Right ventricle myocardium inferior (tissue), 1 donor: ENCODE measurements at regions of chr10 and their contacts with region 1.

Region 1: GRCh38 chr10:51074238-51075028 is at the start of gene PRKG1:
- DNase-seq: peak; percentile 86
- ATAC-seq: peak; percentile 95
- total RNA-seq, gene PRKG1: 28.1 TPM

Region 2: DNA sequence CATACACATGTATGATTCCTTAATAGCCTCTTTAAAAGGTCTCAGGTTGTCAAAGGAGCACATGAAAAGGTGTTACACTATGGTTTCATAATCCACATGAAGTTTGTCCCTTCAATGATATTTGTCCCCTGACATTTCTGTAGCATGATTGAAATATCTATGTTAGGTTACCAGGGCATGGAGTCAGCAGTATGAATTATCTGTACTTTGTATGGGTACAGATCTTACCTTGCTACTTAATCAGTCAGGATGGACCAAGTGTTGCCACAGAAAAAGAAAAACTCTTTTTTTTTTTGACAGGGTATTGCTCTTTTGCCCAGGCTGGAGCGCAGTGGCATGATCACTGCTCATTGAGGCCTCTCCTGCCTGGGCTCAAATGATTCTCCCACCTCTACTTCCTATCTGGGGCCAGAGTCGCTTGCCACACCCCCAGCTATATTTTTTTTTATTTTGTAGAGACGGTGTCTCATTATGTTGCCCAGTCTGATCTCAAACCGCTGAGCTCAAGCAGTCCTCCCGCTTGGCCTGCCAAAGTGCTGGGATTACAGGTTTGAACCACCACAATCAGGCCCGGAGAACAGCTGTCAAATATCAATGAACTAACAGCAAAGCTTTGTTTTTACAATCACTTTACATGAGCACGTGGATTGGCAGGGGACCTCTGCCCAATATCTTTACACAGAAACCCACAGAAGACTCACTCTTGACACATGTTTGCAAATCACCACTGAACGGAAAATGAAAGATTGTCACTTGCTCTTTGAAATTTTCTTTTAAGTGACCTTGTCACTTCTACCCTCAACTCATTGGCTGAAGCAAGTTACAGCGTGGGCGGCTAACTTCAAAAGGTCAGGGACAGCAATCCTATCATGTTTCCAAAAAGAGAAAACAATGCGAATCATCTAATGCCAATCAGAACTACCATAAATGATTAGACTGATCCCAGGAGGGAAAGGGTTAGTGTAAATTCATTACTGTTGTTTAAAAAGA is 140.1 kb after region 1 on chr10:
- intact Hi-C with region 1: no loop called
- DNase-seq: peak; percentile 58
- ATAC-seq: peak; percentile 57

Region 3: DNA sequence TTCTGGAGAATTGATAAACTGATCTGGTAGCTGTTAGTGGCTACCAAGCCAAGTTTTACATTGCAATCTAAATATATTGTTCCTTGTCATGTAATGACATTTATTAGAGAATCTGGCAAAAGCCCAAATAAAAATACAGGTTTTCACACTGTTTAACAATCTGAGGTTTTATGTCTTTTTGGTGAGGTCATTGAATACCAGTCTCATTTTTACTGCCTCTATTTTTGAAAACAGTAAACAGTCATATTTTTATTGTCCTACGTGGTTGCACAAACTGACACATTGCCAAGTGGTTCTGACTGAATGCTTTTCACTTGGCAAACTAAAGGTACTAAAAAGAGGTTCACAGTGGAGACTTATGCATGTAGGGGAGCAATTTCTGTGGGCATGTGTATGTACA is 157.3 kb after region 1 on chr10:
- intact Hi-C with region 1: loop called (anchors 5 kb)
- DNase-seq: no peak
- ATAC-seq: no peak